Psoas muscle (tissue), 8 donors: ENCODE measurements at regions of chr9 and their contacts with region 1.

Region 1: DNA sequence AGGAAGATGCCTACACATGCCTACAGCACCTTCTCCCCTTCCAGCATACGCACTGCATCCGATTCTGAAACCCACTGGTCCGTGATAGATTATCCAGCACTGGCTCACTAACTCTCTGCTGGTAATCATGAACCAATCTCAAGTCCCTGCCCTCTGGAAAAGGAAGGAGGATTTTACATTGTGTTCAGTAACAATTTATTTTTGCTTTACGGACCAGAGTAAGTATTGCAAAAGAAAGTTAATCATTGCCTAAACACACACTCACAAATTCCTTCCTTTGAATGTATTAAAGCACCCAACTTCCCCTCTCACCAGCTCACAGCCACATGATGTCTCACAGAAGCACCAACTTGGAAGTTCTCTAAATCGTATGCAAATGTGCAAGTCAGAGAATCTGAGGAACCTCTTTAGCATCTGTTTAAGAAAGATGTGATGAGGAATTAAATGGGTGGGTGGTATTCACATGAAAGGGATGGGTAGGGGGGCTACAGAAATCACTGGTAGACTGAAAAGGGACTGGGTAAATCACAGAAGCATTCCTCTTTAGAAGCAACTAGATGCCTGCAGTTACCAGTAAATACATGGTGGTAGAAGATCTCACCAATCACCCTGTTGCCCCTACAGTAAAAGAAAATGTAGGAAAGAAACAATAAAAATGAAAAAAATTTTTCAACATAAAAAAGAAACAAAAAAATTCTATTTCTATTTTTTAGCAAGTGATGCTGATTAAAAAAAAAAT is 8.4 kb downstream of the GNAQ start:
- DNase-seq: no peak
- ATAC-seq: peak in 2 of 4 donors; percentile 22 to 28
- H3K4me3 ChIP-seq: no peak overlapping the region
- H3K27ac ChIP-seq: no peak overlapping the region
- H3K4me1 ChIP-seq: peaks cover 22% of the 10 kb centered on the region
- H3K27me3 ChIP-seq: no peaks in the 10 kb centered on the region
- CTCF ChIP-seq: no peak

Region 2: DNA sequence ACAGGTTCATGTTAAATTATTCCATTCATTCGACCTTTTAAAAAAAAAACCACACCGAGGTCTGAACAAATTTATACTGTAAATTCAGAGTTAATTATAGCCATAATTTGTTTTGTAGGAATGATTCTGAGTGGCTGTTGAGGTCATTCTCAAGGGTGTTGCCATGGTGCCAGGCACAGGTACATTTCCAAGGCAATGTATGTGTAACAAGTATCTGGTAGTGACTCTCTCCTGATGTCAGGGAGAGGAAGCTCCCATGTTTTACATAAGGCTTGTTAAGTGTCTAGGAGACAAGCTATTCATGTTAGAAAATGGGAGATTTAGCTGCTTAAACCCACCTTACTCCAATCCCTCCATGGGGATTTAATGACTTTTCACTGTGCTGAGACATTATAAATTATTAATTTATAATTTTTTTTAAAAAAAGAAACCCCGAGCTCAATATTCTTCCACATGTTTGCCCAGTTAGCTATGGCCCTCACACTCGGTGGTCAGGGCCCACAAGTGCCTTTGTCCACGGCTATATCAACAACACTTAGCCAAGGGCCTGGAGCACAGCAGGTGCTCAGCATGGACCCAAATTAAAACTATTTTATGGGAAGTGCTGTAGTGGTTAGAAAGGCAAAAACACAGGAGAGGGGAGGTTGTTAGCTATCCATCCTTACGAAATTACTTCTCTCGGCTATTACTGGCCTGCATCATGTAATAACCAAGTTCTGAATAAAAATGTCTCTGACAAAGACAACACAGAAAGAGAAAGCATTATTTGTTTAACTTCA is 220.5 kb before region 1 on chr9:
- intact Hi-C with region 1: no loop called
- DNase-seq: no peak
- ATAC-seq: no peak
- H3K4me3 ChIP-seq: no peak overlapping the region
- H3K27ac ChIP-seq: no peak overlapping the region
- H3K4me1 ChIP-seq: peaks cover 20% of the 10 kb centered on the region
- H3K27me3 ChIP-seq: no peaks in the 10 kb centered on the region
- CTCF ChIP-seq: no peak

Region 3: GRCh38 chr9:77987081-77987656 is 36.0 kb before region 1 on chr9:
- intact Hi-C with region 1: loop called in 1 of 2 experiments (anchors 5 kb)
- DNase-seq: no peak
- ATAC-seq: no peak
- H3K4me3 ChIP-seq: no peak overlapping the region
- H3K27ac ChIP-seq: no peak overlapping the region
- H3K4me1 ChIP-seq: peaks cover 9% of the 10 kb centered on the region
- H3K27me3 ChIP-seq: no peaks in the 10 kb centered on the region
- CTCF ChIP-seq: no peak